Activated CD8-positive, alpha-beta T cell treated with anti-CD3 and anti-CD28 coated beads, Interleukin-2, amount 10 ng/mL, durations not matched to agents 7 days and 5 days (primary cell): ENCODE measurements at regions of chr11 and their contacts with region 1.

Region 1: GRCh38 chr11:124953753-124954589 is at the start of gene CCDC15:
- DNase-seq: peak; percentile 98
- ATAC-seq: peak; percentile 94
- H3K4me3 Mint-ChIP-seq: no peak within 1 kb of the TSS
- H3K27ac Mint-ChIP-seq: no peak within 1 kb of the TSS
- H3K4me1 Mint-ChIP-seq: peaks cover 10% of the 10 kb centered on the region
- H3K27me3 Mint-ChIP-seq: no peaks in the 10 kb centered on the region
- total RNA-seq, gene CCDC15: 7.7 to 8.8 TPM

Region 2: GRCh38 chr11:124865921-124866583 is 87.9 kb before region 1 on chr11:
- CTCF ChIA-PET with region 1: interaction called, 11 read pairs
- POLR2A ChIA-PET with region 1: no interaction called
- DNase-seq: peak; percentile 60
- ATAC-seq: peak; percentile 57
- H3K4me3 Mint-ChIP-seq: no peak overlapping the region
- H3K27ac Mint-ChIP-seq: no peak overlapping the region
- H3K4me1 Mint-ChIP-seq: peaks cover 21% of the 10 kb centered on the region
- H3K27me3 Mint-ChIP-seq: peaks cover 89% of the 10 kb centered on the region

Region 3: DNA sequence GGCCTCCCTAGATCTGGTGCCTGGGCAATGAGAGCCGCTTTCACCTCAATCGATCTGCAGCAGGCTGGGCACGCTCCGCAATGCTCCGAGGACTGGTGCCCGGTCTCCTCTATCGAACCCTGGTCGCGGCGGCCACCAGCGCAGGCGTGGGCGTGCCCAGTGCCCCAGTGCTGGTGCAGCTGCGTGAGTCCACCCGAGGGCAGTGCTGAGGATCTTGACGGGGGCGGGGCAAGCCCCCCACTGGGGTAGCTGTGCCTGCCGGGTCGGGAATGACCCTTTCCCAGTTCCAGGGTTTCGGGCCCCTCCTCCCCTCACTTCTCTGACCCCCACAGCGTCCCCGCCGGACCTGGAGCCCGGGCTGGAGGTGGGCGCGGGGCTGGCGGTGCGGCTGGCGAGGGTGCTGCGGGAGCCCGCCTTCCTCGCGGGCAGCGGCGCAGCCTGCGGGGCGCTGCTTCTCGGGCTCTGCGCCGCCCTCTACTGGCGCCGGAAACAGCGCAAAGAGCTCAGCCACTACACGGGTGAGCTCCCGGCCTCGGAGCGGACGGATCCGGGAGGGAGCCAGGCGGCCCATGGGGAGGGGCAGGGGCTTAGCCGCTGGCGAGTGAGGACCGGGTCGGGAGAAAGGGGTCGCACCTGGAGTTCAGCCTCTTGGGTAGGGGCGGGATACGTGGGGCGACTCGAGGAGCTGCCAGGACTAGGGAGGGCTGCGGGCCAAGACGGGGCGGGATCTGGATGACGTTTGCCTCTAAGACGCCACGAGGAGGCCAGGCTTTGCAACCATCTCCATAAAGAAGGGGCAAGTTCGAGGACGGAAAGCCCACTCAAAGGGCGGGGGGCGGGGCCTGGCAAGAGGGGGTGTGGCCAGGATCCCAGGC is 77.8 kb before region 1 on chr11:
- CTCF ChIA-PET with region 1: interaction called, 21 read pairs
- POLR2A ChIA-PET with region 1: interaction called, 9 read pairs
- DNase-seq: peak; percentile 86
- ATAC-seq: peak; percentile 95
- H3K4me3 Mint-ChIP-seq: peak overlapping the region; percentile 84
- H3K27ac Mint-ChIP-seq: peak overlapping the region; percentile 93
- H3K4me1 Mint-ChIP-seq: peaks cover 24% of the 10 kb centered on the region
- H3K27me3 Mint-ChIP-seq: peaks cover 41% of the 10 kb centered on the region

Region 4: GRCh38 chr11:124923296-124923695 is 30.7 kb before region 1 on chr11:
- CTCF ChIA-PET with region 1: interaction called, 11 read pairs
- POLR2A ChIA-PET with region 1: interaction called, 14 read pairs
- DNase-seq: peak; percentile 46
- ATAC-seq: peak; percentile 63
- H3K4me3 Mint-ChIP-seq: no peak overlapping the region
- H3K27ac Mint-ChIP-seq: peak overlapping the region; percentile 69
- H3K4me1 Mint-ChIP-seq: peaks cover 29% of the 10 kb centered on the region
- H3K27me3 Mint-ChIP-seq: peaks cover 3% of the 10 kb centered on the region

Region 5: DNA sequence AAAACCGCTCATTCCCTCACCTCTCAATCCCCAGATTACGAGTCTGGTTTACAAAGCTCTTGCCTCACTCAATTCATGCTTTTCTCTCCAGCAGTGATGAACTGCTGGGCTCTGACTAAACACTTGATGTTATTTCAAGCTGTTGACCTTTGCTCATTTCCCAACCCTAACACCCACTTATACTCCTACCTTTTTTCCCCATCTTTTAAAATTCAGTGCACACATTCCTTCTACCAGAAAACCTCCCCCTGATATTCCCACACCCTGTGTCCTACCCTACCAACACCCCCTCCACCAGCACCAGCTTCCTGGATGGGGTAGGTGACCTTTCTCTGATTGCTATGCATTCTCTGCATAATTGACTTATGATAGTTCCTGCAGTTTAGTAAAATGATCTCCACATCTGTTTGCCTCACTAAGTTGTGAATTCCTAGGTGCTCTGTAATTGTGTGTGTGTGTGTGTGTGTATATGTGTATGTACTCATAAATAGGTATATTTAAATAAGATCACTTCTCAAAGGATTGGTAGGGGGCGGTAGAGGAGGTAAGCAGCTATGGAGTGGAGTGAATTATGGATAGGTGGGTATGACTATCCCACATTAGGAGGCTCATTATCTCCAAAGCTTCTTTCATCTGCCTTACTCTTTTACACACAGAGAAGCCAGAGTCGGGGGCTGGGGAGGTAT is 19.0 kb before region 1 on chr11:
- CTCF ChIA-PET with region 1: interaction called, 10 read pairs
- POLR2A ChIA-PET with region 1: interaction called, 5 read pairs
- DNase-seq: no peak
- ATAC-seq: no peak
- H3K4me3 Mint-ChIP-seq: no peak overlapping the region
- H3K27ac Mint-ChIP-seq: no peak overlapping the region
- H3K4me1 Mint-ChIP-seq: peaks cover 12% of the 10 kb centered on the region
- H3K27me3 Mint-ChIP-seq: peaks cover 10% of the 10 kb centered on the region

Region 6: GRCh38 chr11:125123947-125124617 is 170.1 kb after region 1 on chr11:
- CTCF ChIA-PET with region 1: interaction called, 13 read pairs
- POLR2A ChIA-PET with region 1: no interaction called
- DNase-seq: peak; percentile 53
- ATAC-seq: peak; percentile 77
- H3K4me3 Mint-ChIP-seq: no peak overlapping the region
- H3K27ac Mint-ChIP-seq: no peak overlapping the region
- H3K4me1 Mint-ChIP-seq: no peaks in the 10 kb centered on the region
- H3K27me3 Mint-ChIP-seq: peaks cover 22% of the 10 kb centered on the region

Region 7: GRCh38 chr11:125141686-125142535 is 187.9 kb after region 1 on chr11:
- CTCF ChIA-PET with region 1: interaction called, 21 read pairs
- POLR2A ChIA-PET with region 1: no interaction called
- DNase-seq: peak; percentile 63
- ATAC-seq: peak; percentile 89
- H3K4me3 Mint-ChIP-seq: no peak overlapping the region
- H3K27ac Mint-ChIP-seq: no peak overlapping the region
- H3K4me1 Mint-ChIP-seq: no peaks in the 10 kb centered on the region
- H3K27me3 Mint-ChIP-seq: peaks cover 23% of the 10 kb centered on the region